OCI-LY7 (cell line): ENCODE measurements at regions of chr1 and their contacts with region 1.

Region 1: DNA sequence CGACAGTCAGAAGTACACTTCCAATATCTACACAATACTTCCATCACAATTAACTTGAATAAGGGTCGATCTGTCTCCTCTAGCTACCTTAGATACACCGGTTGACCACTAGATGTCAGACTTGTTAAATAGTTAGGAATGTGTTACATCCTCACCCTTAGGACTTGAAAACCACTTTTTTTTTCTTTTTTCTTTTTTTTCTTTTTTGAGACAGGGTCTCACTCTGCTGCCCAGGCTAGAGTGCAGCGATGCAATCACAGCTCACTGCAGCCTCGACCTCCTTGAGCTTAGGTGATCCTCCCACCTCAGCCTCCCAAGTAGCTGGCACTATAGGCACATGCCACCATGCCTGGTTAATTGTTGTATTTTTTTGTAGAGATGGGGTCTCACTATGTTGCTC is 120.4 kb upstream of the GREM2 start:
- DNase-seq: peak; percentile 60
- H3K4me3 ChIP-seq: no peak overlapping the region
- H3K27ac ChIP-seq: no peak overlapping the region
- H3K4me1 ChIP-seq: no peaks in the 10 kb centered on the region
- CTCF ChIP-seq: peak; percentile 79

Region 2: DNA sequence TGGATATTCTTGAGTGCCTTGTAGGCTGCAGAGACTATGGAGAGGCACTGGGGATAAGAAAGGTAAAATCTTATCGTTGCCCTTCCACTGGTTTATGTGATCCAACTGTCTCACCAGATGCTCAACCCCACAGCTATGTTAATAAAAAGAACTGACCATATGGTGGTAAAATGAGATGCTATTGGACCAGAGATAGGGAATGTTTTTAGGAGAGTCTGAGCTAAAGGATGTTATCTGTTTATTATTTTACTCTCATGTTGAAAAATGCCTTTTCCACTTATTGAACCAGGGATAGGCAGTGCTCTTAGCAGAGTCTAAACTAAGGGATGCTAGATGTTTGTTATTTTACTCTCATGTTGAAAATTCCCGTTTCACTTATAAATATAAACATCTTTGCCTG is 52.4 kb after region 1 on chr1:
- CTCF ChIA-PET with region 1: no interaction called
- POLR2A ChIA-PET with region 1: no interaction called
- intact Hi-C with region 1: no loop called
- DNase-seq: no peak
- H3K4me3 ChIP-seq: no peak overlapping the region
- H3K27ac ChIP-seq: no peak overlapping the region
- H3K4me1 ChIP-seq: no peaks in the 10 kb centered on the region
- CTCF ChIP-seq: no peak

Region 3: DNA sequence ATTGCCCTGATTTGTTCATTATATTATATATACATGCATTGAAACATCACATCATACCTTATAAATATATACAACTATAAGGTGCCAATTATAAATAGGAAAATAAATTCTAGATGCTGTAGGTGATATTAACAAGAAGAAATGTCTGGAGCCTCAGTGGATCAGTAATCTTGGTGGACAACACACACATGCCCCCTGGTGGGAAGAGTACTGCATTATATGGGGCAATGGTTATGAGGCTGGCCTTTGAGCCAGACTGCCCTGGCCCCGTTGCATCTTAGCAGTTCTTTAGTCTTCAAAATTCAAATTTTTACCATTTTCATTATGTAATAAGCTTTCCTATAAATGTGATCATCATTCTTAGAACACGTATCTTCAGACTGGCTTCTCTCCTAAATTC is 214.5 kb after region 1 on chr1:
- CTCF ChIA-PET with region 1: no interaction called
- POLR2A ChIA-PET with region 1: interaction called, 3 read pairs
- intact Hi-C with region 1: loop called (anchors 10 kb)
- DNase-seq: peak; percentile 63
- H3K4me3 ChIP-seq: no peak overlapping the region
- H3K27ac ChIP-seq: no peak overlapping the region
- H3K4me1 ChIP-seq: no peaks in the 10 kb centered on the region
- CTCF ChIP-seq: peak; percentile 82

Region 4: DNA sequence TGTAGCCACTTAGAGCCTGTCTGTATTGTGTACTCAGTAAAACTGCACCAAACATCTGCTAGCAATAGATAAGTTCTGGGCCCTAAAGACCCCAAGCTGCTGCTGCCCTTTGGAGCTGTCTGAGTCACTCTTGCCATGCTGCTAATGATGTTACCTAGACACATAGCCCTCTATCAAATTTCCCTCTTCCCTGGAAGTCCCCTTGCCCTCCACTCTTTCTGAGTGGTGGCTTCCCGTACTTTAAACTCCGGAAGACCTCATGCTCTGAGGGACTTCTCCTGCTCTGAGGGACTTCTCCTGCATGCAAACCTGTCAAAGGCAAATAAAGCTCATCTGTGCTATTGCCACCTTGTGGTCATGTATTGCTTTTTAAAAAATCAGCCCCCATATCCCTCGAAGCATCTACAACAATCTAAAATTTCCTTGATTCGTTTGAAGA is 753.2 kb after region 1 on chr1:
- CTCF ChIA-PET with region 1: no interaction called
- POLR2A ChIA-PET with region 1: no interaction called
- intact Hi-C with region 1: loop called (anchors 5 kb)
- DNase-seq: peak; percentile 44
- H3K4me3 ChIP-seq: no peak overlapping the region
- H3K27ac ChIP-seq: no peak overlapping the region
- H3K4me1 ChIP-seq: no peaks in the 10 kb centered on the region
- CTCF ChIP-seq: peak; percentile 80